ENCODE measurements at regions of chr7 and their contacts with region 1.

Region 1: DNA sequence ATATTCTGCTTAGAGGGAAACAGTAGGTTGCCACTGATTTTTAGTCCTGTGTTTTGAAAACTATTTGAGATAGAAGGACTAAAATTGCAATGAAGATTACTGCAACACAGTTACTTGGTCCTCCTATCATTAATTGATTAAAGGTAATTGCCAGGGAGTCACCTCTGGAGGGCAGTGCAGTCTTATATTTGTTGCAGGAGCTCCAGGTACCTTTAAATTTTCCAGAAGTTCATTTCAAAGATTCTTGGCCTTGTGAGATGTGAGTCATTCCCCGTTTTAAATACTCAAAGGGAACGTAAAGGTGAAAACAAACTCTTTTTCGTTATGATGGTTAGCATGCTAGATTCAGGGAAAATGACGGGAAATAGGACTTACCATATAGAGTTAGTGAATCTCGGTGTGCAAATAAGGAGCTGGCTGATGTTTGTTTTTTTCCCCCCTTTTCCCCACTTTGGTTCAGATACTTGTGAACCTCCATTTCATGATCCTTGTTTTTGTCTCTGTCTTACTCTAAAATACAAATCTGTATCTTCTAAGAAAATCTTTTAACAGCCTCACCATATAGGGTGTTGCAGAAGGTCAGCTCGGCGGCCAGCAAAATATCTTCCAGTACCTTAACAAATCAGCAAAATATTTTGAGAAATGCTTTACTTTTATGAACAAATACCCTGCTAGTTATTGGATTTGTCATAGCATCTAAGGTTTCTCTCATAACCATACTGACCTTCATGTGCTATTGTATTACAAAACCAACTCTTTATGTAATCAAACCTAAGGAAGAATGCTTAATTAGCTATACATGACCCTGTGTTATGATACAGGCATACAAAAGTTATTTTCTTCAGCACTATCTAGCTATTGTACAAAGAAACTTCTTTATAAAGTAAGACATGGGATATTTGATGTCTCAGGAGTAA is 143.0 kb upstream of the HDAC9 start:
- DNase-seq: peak; percentile 70
- ATAC-seq: peak; percentile 52
- H3K4me3 ChIP-seq: no peak overlapping the region
- H3K4me3 Mint-ChIP-seq: no peak overlapping the region
- H3K27ac ChIP-seq: no peak overlapping the region
- H3K27ac Mint-ChIP-seq: no peak overlapping the region
- H3K4me1 ChIP-seq: peaks cover 11 to 12% of the 10 kb centered on the region in 2 donors
- H3K4me1 Mint-ChIP-seq: peaks cover 25% of the 10 kb centered on the region
- H3K27me3 ChIP-seq: no peaks in the 10 kb centered on the region
- H3K27me3 Mint-ChIP-seq: no peaks in the 10 kb centered on the region
- CTCF ChIP-seq: peak; percentile 80

Region 2: DNA sequence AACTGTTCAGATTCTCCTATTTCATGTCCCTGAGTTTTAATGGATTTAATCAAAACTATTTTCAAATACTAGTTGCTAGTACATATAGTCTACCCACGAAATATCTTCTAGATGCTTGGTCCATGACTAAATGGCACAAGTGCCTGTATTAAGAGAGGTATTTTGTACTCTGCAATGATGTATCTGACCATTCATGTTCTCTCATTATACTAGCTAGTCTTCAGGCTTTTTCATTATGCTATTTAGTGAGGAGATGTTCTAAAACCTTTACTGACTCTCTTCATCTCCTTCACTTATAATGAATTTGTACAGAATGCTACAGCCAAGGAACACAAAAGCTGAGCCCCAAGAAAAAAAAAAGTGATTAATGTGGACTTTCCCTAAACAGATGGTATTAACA is 831.7 kb before region 1 on chr7:
- CTCF ChIA-PET with region 1: no interaction called
- POLR2A ChIA-PET with region 1: no interaction called
- intact Hi-C with region 1: no loop called
- DNase-seq: no peak
- ATAC-seq: no peak
- H3K4me3 ChIP-seq: no peak overlapping the region
- H3K4me3 Mint-ChIP-seq: no peak overlapping the region
- H3K27ac ChIP-seq: no peak overlapping the region
- H3K27ac Mint-ChIP-seq: no peak overlapping the region
- H3K4me1 ChIP-seq: no peaks in the 10 kb centered on the region
- H3K4me1 Mint-ChIP-seq: no peaks in the 10 kb centered on the region
- H3K27me3 ChIP-seq: no peaks in the 10 kb centered on the region
- H3K27me3 Mint-ChIP-seq: no peaks in the 10 kb centered on the region
- CTCF ChIP-seq: no peak

Region 3: DNA sequence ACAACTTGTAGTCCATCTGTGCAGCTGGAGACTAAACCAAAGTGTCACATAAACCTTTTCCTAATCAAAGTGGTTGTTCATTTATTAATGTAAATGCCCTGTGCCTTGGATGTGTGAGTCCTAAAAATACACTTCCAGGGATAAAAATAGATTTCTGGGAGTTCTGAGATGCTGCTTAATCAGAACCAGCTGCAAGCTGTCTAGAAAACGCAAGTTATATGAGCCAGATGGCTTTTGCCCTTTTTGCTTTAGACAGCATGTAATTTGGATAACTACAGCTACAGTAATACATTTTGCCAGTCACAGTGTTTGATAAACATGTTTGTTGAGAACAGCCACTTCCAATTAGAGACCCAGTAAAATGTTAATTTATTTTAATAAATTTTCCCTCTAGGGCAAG is 139.8 kb before region 1 on chr7:
- CTCF ChIA-PET with region 1: interaction called, 160 read pairs
- POLR2A ChIA-PET with region 1: no interaction called
- intact Hi-C with region 1: no loop called
- DNase-seq: no peak
- ATAC-seq: no peak
- H3K4me3 ChIP-seq: no peak overlapping the region
- H3K4me3 Mint-ChIP-seq: no peak overlapping the region
- H3K27ac ChIP-seq: no peak overlapping the region
- H3K27ac Mint-ChIP-seq: no peak overlapping the region
- H3K4me1 ChIP-seq: peaks cover 6 to 7% of the 10 kb centered on the region in 2 donors
- H3K4me1 Mint-ChIP-seq: peaks cover 10% of the 10 kb centered on the region
- H3K27me3 ChIP-seq: no peaks in the 10 kb centered on the region
- H3K27me3 Mint-ChIP-seq: peaks cover 3% of the 10 kb centered on the region
- CTCF ChIP-seq: no peak

Region 4: DNA sequence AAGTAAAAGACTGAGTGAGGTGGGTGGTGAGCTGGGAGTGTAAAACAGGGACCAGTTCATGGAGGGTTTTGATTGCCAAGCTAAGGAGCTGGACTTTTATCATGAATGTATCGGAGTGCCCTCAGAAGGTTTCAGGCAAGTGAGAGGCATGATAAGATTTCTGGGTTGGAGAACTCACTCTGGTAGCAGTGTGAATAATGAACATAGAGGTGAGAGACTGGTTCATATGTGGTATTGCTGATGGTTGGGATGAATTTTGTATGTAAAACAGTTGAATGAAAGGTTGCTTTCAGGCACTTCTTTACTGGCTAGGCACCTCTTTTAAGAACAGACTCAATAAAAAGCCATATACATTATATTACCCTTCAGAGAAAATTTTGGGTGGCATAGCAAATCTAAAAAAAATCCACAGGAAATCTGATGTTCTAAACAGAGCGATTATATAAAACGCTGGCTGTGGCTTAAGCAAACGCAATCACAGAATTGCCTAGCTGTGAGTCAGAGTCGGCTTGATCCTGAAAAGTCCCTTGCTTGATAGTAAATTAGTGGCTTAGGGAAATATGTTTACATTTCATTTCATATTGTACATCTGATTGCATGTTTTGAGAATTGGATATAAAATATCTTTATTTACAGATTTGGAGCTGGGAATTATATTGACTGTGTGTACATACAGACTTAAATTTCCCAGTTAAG is 50.0 kb after region 1 on chr7:
- CTCF ChIA-PET with region 1: interaction called, 13 read pairs
- POLR2A ChIA-PET with region 1: no interaction called
- intact Hi-C with region 1: no loop called
- DNase-seq: no peak
- ATAC-seq: no peak
- H3K4me3 ChIP-seq: no peak overlapping the region
- H3K4me3 Mint-ChIP-seq: peak overlapping the region; percentile 75
- H3K27ac ChIP-seq: peak overlapping the region in 1 of 2 donors; percentile 33
- H3K27ac Mint-ChIP-seq: peak overlapping the region; percentile 80
- H3K4me1 ChIP-seq: peaks cover 34 to 43% of the 10 kb centered on the region in 2 donors
- H3K4me1 Mint-ChIP-seq: peaks cover 59% of the 10 kb centered on the region
- H3K27me3 ChIP-seq: no peaks in the 10 kb centered on the region
- H3K27me3 Mint-ChIP-seq: no peaks in the 10 kb centered on the region
- CTCF ChIP-seq: no peak

Region 5: GRCh38 chr7:18590744-18591340 is 238.2 kb after region 1 on chr7:
- CTCF ChIA-PET with region 1: interaction called, 21 read pairs
- POLR2A ChIA-PET with region 1: no interaction called
- intact Hi-C with region 1: loop called (anchors 5 kb)
- DNase-seq: peak; percentile 21
- ATAC-seq: peak; percentile 24
- H3K4me3 ChIP-seq: no peak overlapping the region
- H3K4me3 Mint-ChIP-seq: no peak overlapping the region
- H3K27ac ChIP-seq: peak overlapping the region in 1 of 2 donors; percentile 60
- H3K27ac Mint-ChIP-seq: no peak overlapping the region
- H3K4me1 ChIP-seq: peaks cover 14 to 19% of the 10 kb centered on the region in 2 donors
- H3K4me1 Mint-ChIP-seq: peaks cover 24% of the 10 kb centered on the region
- H3K27me3 ChIP-seq: no peaks in the 10 kb centered on the region
- H3K27me3 Mint-ChIP-seq: no peaks in the 10 kb centered on the region
- CTCF ChIP-seq: peak; percentile 41

Region 6: DNA sequence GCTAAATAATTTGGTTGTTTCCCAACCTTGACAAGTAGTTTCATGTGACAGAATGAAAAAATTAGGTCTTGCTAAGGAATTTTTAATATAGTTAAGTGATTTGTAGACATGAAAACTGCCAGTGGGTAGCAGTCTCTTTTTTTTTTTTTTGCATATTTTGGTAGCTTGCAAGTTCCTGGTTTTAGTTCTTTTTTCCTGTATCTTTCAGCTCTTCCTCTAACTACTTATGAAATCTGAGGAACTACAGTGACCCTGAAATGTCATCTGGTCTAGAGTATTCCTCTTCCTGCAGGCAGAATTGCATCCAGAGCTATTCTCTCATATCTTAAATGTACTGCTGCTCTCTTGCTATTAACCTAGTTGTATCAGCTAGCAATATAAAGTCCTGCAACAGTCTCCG is 303.3 kb after region 1 on chr7:
- CTCF ChIA-PET with region 1: interaction called, 24 read pairs
- POLR2A ChIA-PET with region 1: no interaction called
- intact Hi-C with region 1: no loop called
- DNase-seq: no peak
- ATAC-seq: no peak
- H3K4me3 ChIP-seq: no peak overlapping the region
- H3K4me3 Mint-ChIP-seq: no peak overlapping the region
- H3K27ac ChIP-seq: no peak overlapping the region
- H3K27ac Mint-ChIP-seq: peak overlapping the region; percentile 22
- H3K4me1 ChIP-seq: no peaks in the 10 kb centered on the region
- H3K4me1 Mint-ChIP-seq: peaks cover 3% of the 10 kb centered on the region
- H3K27me3 ChIP-seq: no peaks in the 10 kb centered on the region
- H3K27me3 Mint-ChIP-seq: no peaks in the 10 kb centered on the region
- CTCF ChIP-seq: no peak

Region 7: GRCh38 chr7:19665399-19666008 is 1312.9 kb after region 1 on chr7:
- CTCF ChIA-PET with region 1: interaction called, 37 read pairs
- POLR2A ChIA-PET with region 1: no interaction called
- intact Hi-C with region 1: loop called (anchors 1 kb)
- DNase-seq: peak; percentile 54
- ATAC-seq: peak; percentile 57
- H3K4me3 ChIP-seq: no peak overlapping the region
- H3K4me3 Mint-ChIP-seq: peak overlapping the region; percentile 27
- H3K27ac ChIP-seq: no peak overlapping the region
- H3K27ac Mint-ChIP-seq: no peak overlapping the region
- H3K4me1 ChIP-seq: peaks cover 9 to 17% of the 10 kb centered on the region in 2 donors
- H3K4me1 Mint-ChIP-seq: peaks cover 16% of the 10 kb centered on the region
- H3K27me3 ChIP-seq: no peaks in the 10 kb centered on the region
- H3K27me3 Mint-ChIP-seq: no peaks in the 10 kb centered on the region
- CTCF ChIP-seq: peak; percentile 85